T-cell (primary cell): ENCODE measurements at regions of chr7 and their contacts with region 1.

Region 1: GRCh38 chr7:128172147-128172546 is 68.9 kb upstream of the LEP start:
- DNase-seq: no peak
- ATAC-seq: no peak
- H3K4me3 ChIP-seq: no peak overlapping the region
- H3K4me3 Mint-ChIP-seq: no peak overlapping the region
- H3K27ac ChIP-seq: no peak overlapping the region
- H3K27ac Mint-ChIP-seq: no peak overlapping the region
- H3K4me1 ChIP-seq: peaks cover 3 to 14% of the 10 kb centered on the region in 2 experiments
- H3K4me1 Mint-ChIP-seq: peaks cover 11 to 17% (median 12%) of the 10 kb centered on the region in 3 donors
- H3K27me3 ChIP-seq: peaks cover 0 to 57% of the 10 kb centered on the region in 2 experiments
- H3K27me3 Mint-ChIP-seq: peaks cover 38 to 57% of the 10 kb centered on the region in 2 donors

Region 2: DNA sequence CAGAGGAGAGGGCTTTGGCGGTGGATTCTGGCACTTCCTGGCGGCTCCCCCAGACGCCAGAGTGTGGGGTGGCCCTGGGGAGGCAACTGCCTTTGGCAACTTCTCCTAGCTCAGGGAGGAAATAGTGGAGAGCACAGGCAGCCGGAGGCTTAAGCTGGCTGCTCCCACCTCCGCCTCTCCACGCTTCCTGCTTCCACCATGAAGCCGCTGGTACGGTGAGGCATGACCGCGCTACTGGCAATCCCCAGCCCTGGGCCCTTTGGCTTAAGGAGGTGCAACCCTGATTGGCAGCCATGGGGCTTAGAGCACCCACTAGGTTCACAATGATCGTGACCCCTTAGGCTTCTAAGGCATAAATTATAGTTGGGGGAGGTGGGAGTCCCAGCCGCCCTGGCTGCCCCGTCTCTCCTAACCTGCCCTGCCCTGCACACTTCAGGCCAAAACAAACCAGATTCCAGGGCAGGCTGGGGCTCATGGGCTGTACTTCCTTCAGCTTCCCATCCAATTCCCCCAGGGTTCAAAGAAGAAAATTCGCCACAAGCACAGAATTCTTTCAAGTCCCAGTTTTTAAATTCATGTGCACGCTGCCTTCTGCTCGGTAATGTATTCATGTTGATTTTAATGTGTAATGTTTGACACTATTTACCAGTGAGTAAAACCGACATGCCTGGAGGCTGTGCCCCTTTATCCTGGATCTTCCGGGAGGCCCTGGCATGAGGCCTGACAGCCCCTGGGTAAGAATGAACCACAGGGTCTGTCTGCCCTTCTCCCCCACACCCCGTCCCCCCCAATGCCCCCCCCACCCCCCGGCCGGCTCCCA is 50.2 kb before region 1 on chr7:
- CTCF ChIA-PET with region 1: interaction called in 1 of 2 experiments, 12 read pairs
- POLR2A ChIA-PET with region 1: no interaction called
- DNase-seq: no peak
- ATAC-seq: peak in 1 of 4 experiments; percentile 26
- H3K4me3 ChIP-seq: no peak overlapping the region
- H3K4me3 Mint-ChIP-seq: no peak overlapping the region
- H3K27ac ChIP-seq: no peak overlapping the region
- H3K27ac Mint-ChIP-seq: no peak overlapping the region
- H3K4me1 ChIP-seq: no peaks in the 10 kb centered on the region
- H3K4me1 Mint-ChIP-seq: peaks cover 11 to 20% (median 12%) of the 10 kb centered on the region in 3 donors
- H3K27me3 ChIP-seq: peaks cover 0 to 17% of the 10 kb centered on the region in 2 experiments
- H3K27me3 Mint-ChIP-seq: no peaks in the 10 kb centered on the region

Region 3: GRCh38 chr7:128281605-128282380 is 109.6 kb after region 1 on chr7:
- CTCF ChIA-PET with region 1: no interaction called
- POLR2A ChIA-PET with region 1: no interaction called
- DNase-seq: no peak
- ATAC-seq: no peak
- H3K4me3 ChIP-seq: no peak overlapping the region
- H3K4me3 Mint-ChIP-seq: no peak overlapping the region
- H3K27ac ChIP-seq: no peak overlapping the region
- H3K27ac Mint-ChIP-seq: no peak overlapping the region
- H3K4me1 ChIP-seq: no peaks in the 10 kb centered on the region
- H3K4me1 Mint-ChIP-seq: no peaks in the 10 kb centered on the region
- H3K27me3 ChIP-seq: no peaks in the 10 kb centered on the region
- H3K27me3 Mint-ChIP-seq: no peaks in the 10 kb centered on the region